ENCODE measurements at regions of chr4 and their contacts with region 1.

Region 1: DNA sequence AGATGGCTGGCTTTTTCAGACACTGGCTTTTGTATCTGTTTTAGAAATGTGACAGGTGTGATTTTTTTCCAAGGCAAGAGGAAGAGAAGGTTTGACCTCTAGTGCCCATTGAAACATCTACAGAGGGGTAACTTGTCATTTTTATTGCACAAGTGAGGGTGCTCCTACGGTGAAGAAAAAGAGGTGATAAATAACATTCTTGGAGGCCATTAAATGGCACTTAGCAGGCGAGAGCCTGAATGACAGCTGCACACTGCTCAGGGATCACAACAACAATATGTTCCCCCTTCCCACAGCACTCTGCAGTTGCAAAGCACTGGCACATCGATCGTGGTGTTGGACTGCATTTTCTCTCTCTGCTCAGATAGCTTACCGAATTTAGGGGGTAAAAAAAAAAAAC is 22.9 kb downstream of the FAM184B start:
- DNase-seq: no peak
- ATAC-seq: no peak
- H3K4me3 ChIP-seq: no peak overlapping the region
- H3K27ac ChIP-seq: no peak overlapping the region
- H3K4me1 ChIP-seq: no peaks in the 10 kb centered on the region
- H3K27me3 ChIP-seq: peaks cover 0 to 5% of the 10 kb centered on the region in 2 experiments; a peak in 1 of 5 replicates
- CTCF ChIP-seq: no peak
- EP300 ChIP-seq: no peak
- POLR2A ChIP-seq: no peak
- RAD21 ChIP-seq: no peak

Region 2: GRCh38 chr4:18366892-18367291 is 608.4 kb after region 1 on chr4:
- CTCF ChIA-PET with region 1: no interaction called
- POLR2A ChIA-PET with region 1: no interaction called
- in situ Hi-C with region 1: no loop called
- intact Hi-C with region 1: loop called (anchors 10 kb)
- DNase-seq: peak; percentile 24
- ATAC-seq: peak; percentile 97
- H3K4me3 ChIP-seq: no peak overlapping the region
- H3K27ac ChIP-seq: no peak overlapping the region
- H3K4me1 ChIP-seq: no peaks in the 10 kb centered on the region
- H3K27me3 ChIP-seq: no peaks in the 10 kb centered on the region
- CTCF ChIP-seq: peak; percentile 78
- EP300 ChIP-seq: no peak
- POLR2A ChIP-seq: no peak
- RAD21 ChIP-seq: 0 out of 2 replicates have a peak, but pooled peaks have one; percentile 40